ENCODE measurements at regions of chr20 and their contacts with region 1.

Region 1: GRCh38 chr20:31674895-31675827 is 37.4 kb downstream of the COX4I2 start:
- DNase-seq: peak in 9 of 10 donors; percentile 41 to 77 (median 55)
- ATAC-seq: peak; percentile 81 to 87
- H3K4me3 Mint-ChIP-seq: peak overlapping the region; percentile 88 to 99 (median 98)
- H3K27ac Mint-ChIP-seq: peak overlapping the region; percentile 94 to 99 (median 98)
- H3K4me1 Mint-ChIP-seq: peaks cover 43 to 75% (median 67%) of the 10 kb centered on the region in 4 donors
- H3K27me3 Mint-ChIP-seq: no peaks in the 10 kb centered on the region

Region 2: GRCh38 chr20:31661625-31662371 is 13.4 kb before region 1 on chr20:
- POLR2A ChIA-PET with region 1: interaction called, 12 read pairs
- DNase-seq: peak; percentile 61 to 86 (median 76)
- ATAC-seq: peak; percentile 90 to 92
- H3K4me3 Mint-ChIP-seq: peak overlapping the region; percentile 69 to 85 (median 82)
- H3K27ac Mint-ChIP-seq: peak overlapping the region; percentile 44 to 94 (median 84)
- H3K4me1 Mint-ChIP-seq: peaks cover 21 to 38% (median 34%) of the 10 kb centered on the region in 4 donors
- H3K27me3 Mint-ChIP-seq: no peaks in the 10 kb centered on the region